ENCODE measurements at regions of chr18 and their contacts with region 1.

Region 1: GRCh38 chr18:13216092-13216582 is 2.4 kb upstream of the LDLRAD4 start:
- DNase-seq: peak; percentile 65 to 69
- H3K4me3 ChIP-seq: no peak overlapping the region
- H3K27ac ChIP-seq: no peak overlapping the region
- H3K4me1 ChIP-seq: peaks cover 4 to 6% of the 10 kb centered on the region in 2 donors
- H3K27me3 ChIP-seq: no peaks in the 10 kb centered on the region
- CTCF ChIP-seq: peak; percentile 74 to 83 (median 78)
- POLR2A ChIP-seq: peak in 1 of 2 donors; percentile 13

Region 2: GRCh38 chr18:13425462-13426133 is 209.5 kb after region 1 on chr18:
- intact Hi-C with region 1: no loop called
- DNase-seq: no peak
- H3K4me3 ChIP-seq: no peak overlapping the region
- H3K27ac ChIP-seq: no peak overlapping the region
- H3K4me1 ChIP-seq: no peaks in the 10 kb centered on the region
- H3K27me3 ChIP-seq: no peaks in the 10 kb centered on the region
- CTCF ChIP-seq: no peak
- POLR2A ChIP-seq: no peak

Region 3: DNA sequence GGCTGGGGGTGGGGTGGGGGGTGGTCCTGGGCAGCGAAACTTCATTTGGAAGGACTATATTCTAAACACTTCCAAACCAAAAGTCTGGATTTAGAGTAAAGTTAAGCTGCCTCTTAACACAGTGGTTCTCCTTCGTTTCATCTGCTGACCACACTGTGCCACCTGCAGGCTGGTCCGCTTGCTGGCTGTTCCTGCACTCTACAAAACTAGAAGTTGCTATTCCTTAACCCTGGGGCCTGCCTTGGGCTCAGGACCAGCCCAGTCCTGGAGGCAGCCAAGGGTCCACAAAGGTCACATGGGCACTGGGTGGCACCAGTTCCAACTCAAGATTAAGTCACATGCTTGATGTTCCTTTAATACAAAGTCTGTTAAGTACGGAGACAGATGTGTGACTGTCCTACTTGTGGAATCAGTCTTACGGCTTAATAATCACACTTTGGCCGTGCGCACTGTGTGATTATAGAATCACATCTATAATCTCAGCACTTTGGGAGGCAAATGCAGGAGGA is 314.8 kb after region 1 on chr18:
- intact Hi-C with region 1: loop called (anchors 10 kb)
- DNase-seq: peak in 1 of 2 donors; percentile 61
- H3K4me3 ChIP-seq: no peak overlapping the region
- H3K27ac ChIP-seq: peak overlapping the region; percentile 18 to 67
- H3K4me1 ChIP-seq: peaks cover 0 to 6% of the 10 kb centered on the region in 2 donors
- H3K27me3 ChIP-seq: no peaks in the 10 kb centered on the region
- CTCF ChIP-seq: peak; percentile 44 to 55 (median 51)
- POLR2A ChIP-seq: no peak

Measured in uterus (tissue), 4 donors.